ENCODE measurements at regions of chr12 and their contacts with region 1.

Region 1: GRCh38 chr12:130013771-130014484 is 110.1 kb upstream of the TMEM132D start:
- DNase-seq: peak; percentile 10
- H3K4me3 Mint-ChIP-seq: no peak overlapping the region
- H3K27ac Mint-ChIP-seq: no peak overlapping the region
- H3K4me1 Mint-ChIP-seq: no peaks in the 10 kb centered on the region
- H3K27me3 Mint-ChIP-seq: no peaks in the 10 kb centered on the region

Region 2: DNA sequence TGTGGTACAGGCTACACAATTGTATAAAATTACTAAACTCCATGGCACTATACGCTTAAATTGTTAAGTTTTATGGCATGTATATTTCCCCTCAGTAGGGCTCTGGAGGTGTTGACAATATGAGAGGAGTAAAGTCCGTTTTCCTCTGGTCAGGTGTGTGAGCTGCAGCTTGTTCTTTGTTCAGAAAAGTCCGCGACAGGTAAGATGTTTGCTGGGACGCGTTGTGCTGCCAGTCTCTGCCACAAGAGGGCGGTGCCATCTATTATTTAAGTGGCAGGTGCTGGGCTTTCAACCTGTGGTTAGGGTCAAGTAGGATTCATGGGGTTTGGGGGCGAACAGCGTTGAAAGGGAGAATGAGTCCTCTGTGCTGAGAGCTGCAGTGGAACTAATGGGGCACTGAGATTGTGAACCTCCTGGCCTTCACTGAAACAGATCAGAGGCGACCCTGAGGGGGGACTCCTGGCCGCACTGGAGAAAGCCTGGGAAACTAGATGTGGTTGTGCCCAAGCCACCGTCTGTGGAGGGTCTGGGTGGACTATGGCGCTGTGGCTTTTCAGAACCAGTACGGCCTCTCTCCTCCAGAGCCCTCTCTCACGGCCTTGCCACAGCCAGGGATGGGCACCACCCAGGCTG is 1369.1 kb before region 1 on chr12:
- intact Hi-C with region 1: loop called (anchors 2 kb)
- DNase-seq: no peak
- H3K4me3 Mint-ChIP-seq: no peak overlapping the region
- H3K27ac Mint-ChIP-seq: no peak overlapping the region
- H3K4me1 Mint-ChIP-seq: no peaks in the 10 kb centered on the region
- H3K27me3 Mint-ChIP-seq: no peaks in the 10 kb centered on the region

Region 3: DNA sequence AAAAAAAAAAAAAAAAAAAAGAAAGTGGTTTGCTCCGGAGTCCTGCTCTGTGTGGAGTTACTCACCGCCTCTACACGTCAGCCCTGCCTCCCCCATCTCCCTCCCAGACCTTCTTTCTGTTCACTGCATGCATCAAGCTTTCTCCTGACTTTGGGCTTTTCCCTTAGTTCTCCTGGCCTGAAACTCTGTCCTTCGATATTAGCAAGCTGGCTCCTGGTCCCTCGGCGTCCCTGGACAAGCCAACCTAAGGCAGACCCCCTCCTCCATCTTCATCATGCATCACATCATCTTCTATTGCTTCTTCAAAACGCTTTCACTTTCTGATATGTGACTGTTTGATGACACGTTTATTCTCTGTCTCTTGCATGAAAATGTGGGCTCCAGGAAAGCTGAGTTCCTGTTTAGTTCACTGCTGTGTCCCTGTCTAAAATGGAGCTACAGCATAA is 1230.8 kb before region 1 on chr12:
- intact Hi-C with region 1: loop called (anchors 5 kb)
- DNase-seq: no peak
- H3K4me3 Mint-ChIP-seq: peak overlapping the region; percentile 50
- H3K27ac Mint-ChIP-seq: peak overlapping the region; percentile 86
- H3K4me1 Mint-ChIP-seq: peaks cover 12% of the 10 kb centered on the region
- H3K27me3 Mint-ChIP-seq: peaks cover 3% of the 10 kb centered on the region

Region 4: GRCh38 chr12:129193263-129193871 is 820.6 kb before region 1 on chr12:
- intact Hi-C with region 1: loop called (anchors 5 kb)
- DNase-seq: no peak
- H3K4me3 Mint-ChIP-seq: no peak overlapping the region
- H3K27ac Mint-ChIP-seq: no peak overlapping the region
- H3K4me1 Mint-ChIP-seq: no peaks in the 10 kb centered on the region
- H3K27me3 Mint-ChIP-seq: no peaks in the 10 kb centered on the region

Region 5: DNA sequence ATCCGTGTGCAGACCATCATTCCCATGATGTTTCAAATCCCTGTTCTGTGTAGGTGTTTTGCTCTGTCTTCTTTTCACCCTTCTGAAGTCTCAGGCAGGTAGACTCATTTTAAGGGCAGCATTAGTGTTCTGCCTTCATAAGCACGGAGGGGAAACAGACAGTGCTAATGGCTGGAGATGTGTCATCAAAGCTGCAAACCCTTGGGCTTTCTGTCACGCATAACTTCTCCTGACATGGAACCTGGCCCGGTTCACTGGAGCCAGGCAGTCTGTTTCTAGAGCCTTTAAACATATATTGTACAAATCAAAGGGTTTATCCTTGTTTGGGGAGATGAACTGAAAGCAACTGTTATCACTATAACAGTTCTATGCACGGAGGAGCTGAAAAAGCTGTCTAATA is 251.5 kb before region 1 on chr12:
- intact Hi-C with region 1: no loop called
- DNase-seq: no peak
- H3K4me3 Mint-ChIP-seq: no peak overlapping the region
- H3K27ac Mint-ChIP-seq: no peak overlapping the region
- H3K4me1 Mint-ChIP-seq: no peaks in the 10 kb centered on the region
- H3K27me3 Mint-ChIP-seq: no peaks in the 10 kb centered on the region

Region 6: DNA sequence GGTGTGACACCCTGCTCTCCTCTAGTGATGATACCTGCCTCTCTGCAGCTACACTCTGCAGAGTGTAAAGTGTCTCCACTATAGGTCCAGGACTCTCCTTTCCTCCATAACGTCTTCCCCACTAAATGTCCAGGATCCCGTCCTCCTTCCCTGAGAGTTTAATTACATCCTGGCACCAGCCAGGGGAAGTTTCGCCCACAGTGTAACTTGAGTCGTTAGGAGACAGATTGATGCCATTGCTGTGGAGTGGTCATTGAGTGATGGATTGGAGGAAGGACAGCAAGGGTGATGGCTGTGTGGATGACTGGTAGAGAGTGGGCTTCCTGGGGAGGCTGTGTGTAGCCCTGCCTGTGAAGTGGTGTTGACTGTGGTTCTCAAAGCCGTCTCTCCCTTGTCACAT is 26.1 kb before region 1 on chr12:
- intact Hi-C with region 1: no loop called
- DNase-seq: no peak
- H3K4me3 Mint-ChIP-seq: no peak overlapping the region
- H3K27ac Mint-ChIP-seq: no peak overlapping the region
- H3K4me1 Mint-ChIP-seq: no peaks in the 10 kb centered on the region
- H3K27me3 Mint-ChIP-seq: no peaks in the 10 kb centered on the region

Region 7: GRCh38 chr12:130240831-130241590 is 227.1 kb after region 1 on chr12:
- intact Hi-C with region 1: no loop called
- DNase-seq: no peak
- H3K4me3 Mint-ChIP-seq: no peak overlapping the region
- H3K27ac Mint-ChIP-seq: no peak overlapping the region
- H3K4me1 Mint-ChIP-seq: no peaks in the 10 kb centered on the region
- H3K27me3 Mint-ChIP-seq: no peaks in the 10 kb centered on the region